WTC11 (cell line): ENCODE measurements at regions of chr14 and their contacts with region 1.

Region 1: DNA sequence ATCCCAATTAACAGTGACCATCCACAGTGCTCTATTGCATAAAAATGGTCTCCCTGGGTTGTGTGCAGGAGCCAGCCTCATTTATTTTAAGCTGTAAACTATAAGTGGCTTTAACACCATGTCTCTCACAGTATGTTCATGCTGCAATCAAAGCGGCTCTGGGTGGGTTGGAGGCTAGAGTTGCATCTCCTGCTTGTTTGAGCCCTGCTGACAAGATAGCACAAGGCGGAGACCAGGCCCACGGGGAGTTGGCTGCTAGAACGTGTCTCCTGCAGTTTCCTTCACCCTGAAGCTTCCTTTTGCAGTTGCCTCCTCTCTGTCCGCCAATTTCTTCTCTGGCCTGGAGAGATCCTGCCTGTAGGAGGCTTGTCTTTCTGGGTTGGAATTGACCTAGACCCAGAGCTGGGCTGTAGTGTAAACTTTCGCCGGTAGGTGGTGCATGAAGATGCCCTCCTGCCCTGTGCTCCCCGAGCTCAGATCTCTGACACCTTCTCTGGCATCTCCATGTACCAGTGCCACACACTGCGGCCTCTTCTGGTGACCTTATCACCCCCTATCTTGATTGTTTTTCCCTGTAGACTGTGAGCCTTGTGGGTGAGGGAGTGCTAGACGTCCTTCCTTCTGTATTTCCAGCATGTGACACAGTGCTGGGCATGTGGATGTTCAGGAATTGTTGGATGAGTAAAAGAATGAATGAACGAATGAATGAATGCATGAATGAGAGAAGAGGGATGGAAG is 10.3 kb downstream of the OTUB2 start:
- DNase-seq: peak; percentile 85
- ATAC-seq: peak; percentile 98
- H3K4me3 Mint-ChIP-seq: no peak overlapping the region
- H3K27ac Mint-ChIP-seq: no peak overlapping the region
- H3K4me1 Mint-ChIP-seq: peaks cover 2% of the 10 kb centered on the region; the same call in 1 of the 2 replicates
- H3K27me3 Mint-ChIP-seq: no peaks in the 10 kb centered on the region
- CTCF ChIP-seq: peak; percentile 77

Region 2: GRCh38 chr14:93788543-93789227 is 247.8 kb before region 1 on chr14:
- CTCF ChIA-PET with region 1: no interaction called
- POLR2A ChIA-PET with region 1: no interaction called
- DNase-seq: peak; percentile 69
- ATAC-seq: peak; percentile 60
- H3K4me3 Mint-ChIP-seq: peak overlapping the region; percentile 89
- H3K27ac Mint-ChIP-seq: no peak overlapping the region
- H3K4me1 Mint-ChIP-seq: peaks cover 16% of the 10 kb centered on the region
- H3K27me3 Mint-ChIP-seq: peaks cover 52% of the 10 kb centered on the region
- CTCF ChIP-seq: no peak

Region 3: GRCh38 chr14:93811676-93812075 is 224.8 kb before region 1 on chr14:
- CTCF ChIA-PET with region 1: no interaction called
- POLR2A ChIA-PET with region 1: no interaction called
- DNase-seq: no peak
- ATAC-seq: no peak
- H3K4me3 Mint-ChIP-seq: no peak overlapping the region
- H3K27ac Mint-ChIP-seq: no peak overlapping the region
- H3K4me1 Mint-ChIP-seq: peaks cover 2% of the 10 kb centered on the region; the same call in 1 of the 2 replicates
- H3K27me3 Mint-ChIP-seq: peaks cover 4% of the 10 kb centered on the region
- CTCF ChIP-seq: no peak

Region 4: GRCh38 chr14:94026173-94026888 is 10.2 kb before region 1 on chr14 and contains the start of gene OTUB2:
- CTCF ChIA-PET with region 1: interaction called, 37 read pairs
- POLR2A ChIA-PET with region 1: no interaction called
- DNase-seq: peak; percentile 98
- ATAC-seq: peak; percentile 99
- H3K4me3 Mint-ChIP-seq: peak within 1 kb of the TSS; percentile 65
- H3K27ac Mint-ChIP-seq: no peak within 1 kb of the TSS
- H3K4me1 Mint-ChIP-seq: peaks cover 20% of the 10 kb centered on the region
- H3K27me3 Mint-ChIP-seq: no peaks in the 10 kb centered on the region
- CTCF ChIP-seq: no peak
- total RNA-seq, gene OTUB2: 3.5 to 4.5 TPM (median 3.9 TPM) in 3 replicates

Region 5: GRCh38 chr14:94066089-94066676 is 29.7 kb after region 1 on chr14:
- CTCF ChIA-PET with region 1: interaction called, 14 read pairs
- POLR2A ChIA-PET with region 1: no interaction called
- DNase-seq: no peak
- ATAC-seq: peak; percentile 53
- H3K4me3 Mint-ChIP-seq: no peak overlapping the region
- H3K27ac Mint-ChIP-seq: peak overlapping the region; percentile 42
- H3K4me1 Mint-ChIP-seq: peaks cover 42% of the 10 kb centered on the region
- H3K27me3 Mint-ChIP-seq: no peaks in the 10 kb centered on the region; the same call in 1 of the 2 replicates
- CTCF ChIP-seq: no peak

Region 6: DNA sequence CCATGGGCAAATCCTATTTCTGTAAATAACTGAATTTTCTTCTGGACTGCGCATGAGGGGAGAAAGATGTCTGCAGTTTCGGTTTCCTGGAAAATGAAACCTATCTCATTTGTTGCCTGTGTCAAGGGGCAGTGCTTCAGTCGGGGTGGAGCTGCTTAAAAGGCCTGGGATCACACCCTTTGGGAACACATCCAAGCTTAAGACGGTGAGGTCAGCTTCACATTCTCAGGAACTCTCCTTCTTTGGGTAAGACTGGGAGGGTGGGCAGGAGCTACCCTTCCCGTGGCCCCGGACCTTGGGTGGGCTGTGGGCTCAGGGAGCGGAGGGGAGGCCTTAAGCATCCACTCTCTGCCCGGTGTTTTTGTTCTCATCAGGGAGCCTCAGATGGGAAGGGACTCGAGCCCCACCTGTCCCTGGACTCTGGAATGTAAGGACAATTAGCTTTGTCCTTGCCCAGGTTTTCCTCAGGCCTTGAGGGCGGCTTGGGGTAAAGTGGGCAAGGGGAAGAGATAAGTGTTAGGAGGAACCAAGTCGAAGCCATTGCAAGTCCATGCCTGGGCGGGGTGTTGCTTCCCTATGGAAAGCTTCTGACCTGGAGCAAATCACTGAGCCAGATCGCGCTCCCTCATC is 74.2 kb after region 1 on chr14 and contains the start of gene IFI27:
- CTCF ChIA-PET with region 1: interaction called, 14 read pairs
- POLR2A ChIA-PET with region 1: no interaction called
- DNase-seq: no peak
- ATAC-seq: peak; percentile 30; the same call in 1 of the 2 replicates
- H3K4me3 Mint-ChIP-seq: no peak within 1 kb of the TSS
- H3K27ac Mint-ChIP-seq: peak within 1 kb of the TSS; percentile 82; the same call in 1 of the 2 replicates
- H3K4me1 Mint-ChIP-seq: peaks cover 14% of the 10 kb centered on the region; the same call in 1 of the 2 replicates
- H3K27me3 Mint-ChIP-seq: no peaks in the 10 kb centered on the region
- CTCF ChIP-seq: no peak
- total RNA-seq, gene IFI27: 1.8 to 3.2 TPM (median 2.4 TPM) in 3 replicates

Region 7: DNA sequence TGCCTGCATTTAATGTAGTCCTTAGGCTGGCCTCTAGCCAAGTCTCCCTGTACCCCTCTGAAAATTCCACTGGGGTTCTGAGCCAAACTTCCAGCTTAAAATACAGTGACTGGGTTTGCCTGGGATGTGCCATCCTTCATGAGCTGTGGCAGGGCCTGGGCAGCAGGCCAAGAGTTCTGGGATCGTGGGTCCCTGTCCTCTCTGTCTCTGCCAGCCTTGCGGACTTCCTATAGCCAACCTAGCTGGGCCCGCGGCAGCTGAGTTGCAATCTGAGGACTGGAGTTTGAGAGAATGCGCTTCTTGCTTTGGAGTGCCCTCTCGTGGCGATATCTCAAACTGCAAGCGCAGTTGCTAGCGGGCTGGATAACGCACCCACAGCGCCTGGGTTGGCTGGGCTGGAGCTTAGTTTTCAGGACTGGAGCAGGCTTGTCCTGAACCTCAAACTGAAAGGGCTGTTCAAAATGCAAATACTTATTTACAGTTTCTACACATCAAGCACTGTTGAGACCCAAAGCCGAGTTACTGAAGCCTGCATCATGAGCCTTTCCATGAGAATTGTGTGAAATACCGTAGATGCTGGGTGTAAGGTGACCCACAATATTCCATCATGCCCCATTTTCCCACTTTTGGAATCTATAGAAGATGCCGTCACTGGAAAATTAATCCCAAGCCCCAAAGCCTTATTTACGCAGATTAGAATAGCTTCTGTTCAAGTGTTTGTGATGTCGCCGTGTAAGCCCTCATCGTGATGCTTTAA is 100.3 kb after region 1 on chr14:
- CTCF ChIA-PET with region 1: interaction called, 76 read pairs
- POLR2A ChIA-PET with region 1: no interaction called
- DNase-seq: peak; percentile 93
- ATAC-seq: peak; percentile 87
- H3K4me3 Mint-ChIP-seq: no peak overlapping the region
- H3K27ac Mint-ChIP-seq: no peak overlapping the region
- H3K4me1 Mint-ChIP-seq: peaks cover 19% of the 10 kb centered on the region
- H3K27me3 Mint-ChIP-seq: peaks cover 7% of the 10 kb centered on the region; the same call in 1 of the 2 replicates
- CTCF ChIP-seq: peak; percentile 92

Region 8: DNA sequence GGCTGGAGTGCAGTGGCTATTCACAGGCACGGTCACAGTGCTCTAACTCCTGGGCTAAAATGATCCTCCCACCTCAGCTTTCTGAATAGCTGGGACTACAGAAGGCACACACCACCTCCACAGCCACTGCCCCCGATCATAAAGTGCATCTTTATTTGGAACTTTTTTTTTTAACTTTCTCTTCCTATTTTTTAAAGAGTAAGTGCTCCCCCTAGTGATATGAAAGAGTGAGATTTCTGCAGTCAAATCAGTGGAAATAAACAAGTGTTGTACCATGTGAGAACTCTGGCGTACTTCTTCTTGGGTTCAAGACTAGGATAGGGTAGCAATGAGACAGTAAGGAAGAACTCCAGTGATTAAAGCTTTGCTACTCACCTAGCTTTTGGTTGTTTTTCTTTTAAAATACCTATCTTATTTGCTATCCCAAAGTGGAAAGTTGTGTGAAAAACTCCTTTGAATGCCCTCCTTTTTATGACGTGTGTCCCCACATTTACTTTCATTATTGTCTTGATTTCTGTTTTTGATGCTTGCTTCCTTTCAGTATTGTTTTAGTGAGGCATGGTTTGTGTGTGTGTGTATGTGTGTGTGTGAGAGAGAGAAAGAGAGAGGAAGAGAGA is 144.3 kb after region 1 on chr14:
- CTCF ChIA-PET with region 1: interaction called, 13 read pairs
- POLR2A ChIA-PET with region 1: no interaction called
- DNase-seq: no peak
- ATAC-seq: peak; percentile 61
- H3K4me3 Mint-ChIP-seq: no peak overlapping the region
- H3K27ac Mint-ChIP-seq: no peak overlapping the region
- H3K4me1 Mint-ChIP-seq: peaks cover 36% of the 10 kb centered on the region
- H3K27me3 Mint-ChIP-seq: peaks cover 16% of the 10 kb centered on the region
- CTCF ChIP-seq: no peak